Posterior cingulate gyrus (tissue), 11 donors: ENCODE measurements at regions of chr7 and their contacts with region 1.

Region 1: GRCh38 chr7:26667500-26668133 is 196.8 kb downstream of the SKAP2 start:
- DNase-seq: peak in 7 of 10 donors; percentile 43 to 92 (median 67)

Region 2: DNA sequence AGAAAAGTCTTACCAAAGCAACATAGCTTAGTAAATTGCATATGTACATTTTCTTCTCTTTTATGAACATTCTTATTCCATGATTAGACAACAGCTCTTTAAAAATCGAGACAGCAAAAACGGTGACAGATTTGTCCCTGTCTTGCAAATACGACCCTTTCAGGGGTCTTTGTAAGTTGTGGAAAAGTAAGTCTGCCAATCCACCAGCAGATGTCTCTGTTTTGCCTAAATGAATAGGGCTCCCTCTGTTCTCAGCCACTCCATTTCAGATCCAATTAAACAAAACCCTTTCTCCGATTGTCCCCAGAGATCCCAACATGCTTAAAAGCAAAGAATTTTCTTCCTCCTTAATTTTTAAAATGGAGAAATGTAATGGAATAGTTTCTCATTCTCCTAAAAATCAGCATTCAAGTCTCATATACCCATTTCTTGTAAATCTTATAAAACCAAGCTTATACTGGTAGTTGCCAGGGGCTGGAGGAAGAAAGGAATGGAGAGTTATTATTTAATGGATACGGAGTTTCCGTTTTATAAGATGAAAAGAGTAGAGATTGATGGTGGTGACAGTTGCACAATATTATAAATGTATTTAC is 576.6 kb before region 1 on chr7:
- intact Hi-C with region 1: loop called (anchors 5 kb)
- DNase-seq: peak in 1 of 10 donors; percentile 32

Region 3: DNA sequence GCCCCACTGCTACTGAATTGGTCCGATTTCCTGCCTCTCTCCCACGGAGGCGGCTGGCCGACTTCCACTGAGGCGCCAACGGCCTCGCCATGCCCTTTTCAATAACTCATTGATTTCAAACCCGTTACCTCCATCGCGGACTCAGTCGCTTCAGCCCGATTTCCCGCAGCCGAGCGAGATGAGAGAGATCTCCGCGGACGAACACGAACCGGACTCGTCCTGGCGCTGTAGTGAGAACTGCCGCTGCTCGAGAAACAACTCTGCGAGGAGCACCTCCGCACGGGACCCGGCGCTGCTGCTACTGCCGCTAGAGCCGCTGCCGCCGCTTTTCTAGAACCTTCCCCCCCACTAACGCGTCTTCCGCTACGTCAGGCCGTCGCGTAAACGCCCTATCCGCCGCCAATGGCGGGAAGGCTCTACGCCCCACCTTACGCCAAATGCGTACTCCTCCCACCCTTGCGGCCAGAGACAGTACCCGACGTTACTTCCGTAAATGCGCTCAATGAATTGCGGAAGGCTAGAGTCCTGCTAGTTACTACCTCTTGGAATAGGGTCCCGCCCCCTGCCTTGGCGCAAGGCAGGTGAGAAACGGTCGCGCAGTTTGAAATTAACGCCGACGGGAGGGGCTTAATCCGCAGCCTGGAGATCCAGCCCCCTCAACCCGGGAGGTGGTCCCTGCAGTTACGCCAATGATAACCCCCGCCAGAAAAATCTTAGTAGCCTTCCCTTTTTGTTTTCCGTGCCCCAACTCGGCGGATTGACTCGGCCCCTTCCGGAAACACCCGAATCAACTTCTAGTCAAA is 467.0 kb before region 1 on chr7 and contains the start of gene HNRNPA2B1:
- intact Hi-C with region 1: loop called (anchors 10 kb)
- DNase-seq: peak; percentile 95 to 99 (median 96)

Region 4: GRCh38 chr7:26490650-26491624 is 176.7 kb before region 1 on chr7:
- intact Hi-C with region 1: loop called (anchors 10 kb)
- DNase-seq: peak in 6 of 10 donors; percentile 18 to 86 (median 30)

Region 5: GRCh38 chr7:26603631-26604030 is 64.0 kb before region 1 on chr7:
- intact Hi-C with region 1: no loop called
- DNase-seq: no peak

Region 6: GRCh38 chr7:27160546-27161213 is 493.1 kb after region 1 on chr7:
- intact Hi-C with region 1: loop called (anchors 5 kb)
- DNase-seq: peak; percentile 66 to 97 (median 80)